Motor neuron (in vitro differentiated cells): ENCODE measurements at regions of chr2 and their contacts with region 1.

Region 1: DNA sequence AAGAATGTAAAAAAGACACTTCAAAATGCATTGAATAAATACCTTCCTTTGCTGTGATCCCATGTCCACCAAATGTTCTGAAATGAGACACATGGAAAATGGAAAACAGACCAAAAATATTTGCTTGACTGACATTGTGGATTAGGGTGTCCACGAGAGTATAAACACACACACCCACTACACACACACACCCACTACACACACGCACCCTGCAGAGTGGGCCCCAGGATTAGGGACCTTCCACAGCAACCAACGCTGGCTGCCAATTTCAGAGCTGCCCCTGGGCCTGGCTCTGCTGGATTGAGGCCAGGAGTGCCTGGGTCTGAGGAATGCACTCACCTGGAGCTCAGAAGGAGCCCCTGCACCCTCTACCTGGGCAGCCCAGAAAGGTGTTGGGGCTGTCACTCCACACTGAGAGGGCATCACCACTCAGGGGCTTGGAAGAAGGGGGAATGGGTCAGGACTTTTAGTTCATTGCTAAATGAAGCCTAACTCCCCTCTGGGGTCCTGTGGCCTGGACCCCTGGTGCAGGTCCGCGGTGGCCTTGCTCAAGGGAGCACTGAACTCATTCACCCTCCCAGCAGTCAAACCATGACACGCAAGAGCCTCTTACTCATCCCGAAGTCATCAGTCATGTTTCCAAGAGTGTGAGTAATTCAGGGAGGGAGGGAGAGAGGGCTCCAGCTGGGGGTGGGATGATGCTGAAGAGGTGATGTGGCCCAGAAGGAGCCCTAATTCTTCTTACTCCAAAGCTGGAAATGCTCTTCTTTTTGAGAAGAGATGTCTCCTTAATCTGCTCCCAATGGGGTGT is 50.2 kb upstream of the PLB1 start:
- ATAC-seq: peak in 7 of 8 experiments; percentile 67 to 95 (median 94)
- H3K4me3 ChIP-seq: no peak overlapping the region
- H3K27ac ChIP-seq: peak overlapping the region in 1 of 2 donors; percentile 78
- H3K4me1 ChIP-seq: peaks cover 0 to 4% of the 10 kb centered on the region in 2 donors

Region 2: DNA sequence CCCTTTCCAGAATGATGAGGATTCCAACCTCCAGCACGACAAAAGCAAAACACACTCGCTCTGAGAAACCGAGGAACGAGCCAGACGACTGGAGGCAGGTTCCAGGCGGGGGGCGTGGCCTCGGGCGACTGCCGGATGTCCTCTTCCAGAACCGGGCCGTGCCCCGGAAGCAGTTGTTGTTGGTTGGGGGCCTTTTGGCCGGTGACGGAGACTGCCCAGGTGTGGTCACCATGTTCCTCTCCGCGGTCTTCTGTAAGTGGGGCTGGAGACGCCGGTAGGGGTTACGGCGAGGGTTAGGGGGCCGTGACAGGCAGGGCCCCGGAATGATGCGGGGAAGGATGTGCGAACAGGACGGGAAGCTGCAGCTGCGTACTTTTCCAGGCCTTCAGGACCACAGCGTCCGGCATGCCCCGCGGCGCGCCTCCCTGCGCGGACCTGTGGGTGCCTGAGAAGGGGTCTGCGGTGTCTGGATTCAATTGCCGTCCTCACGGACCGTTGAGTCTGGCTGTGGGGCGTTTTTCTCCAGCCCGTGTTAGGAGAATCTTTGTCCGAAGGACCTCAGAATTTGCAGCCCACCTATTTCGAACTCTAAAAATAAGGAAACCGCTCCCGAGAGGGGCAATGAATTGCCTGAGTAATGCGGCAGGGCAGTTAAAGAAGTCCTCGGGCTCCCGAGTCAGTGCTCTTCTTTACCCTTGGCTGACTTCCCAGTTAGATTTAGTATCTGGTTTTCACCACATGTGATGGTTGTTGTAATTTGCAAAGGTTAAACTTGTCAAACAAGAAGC is 673.9 kb before region 1 on chr2 and contains the start of gene MRPL33:
- in situ Hi-C with region 1: loop called in 1 of 9 experiments (anchors 25 kb)
- ATAC-seq: peak; percentile 96 to 99 (median 98)
- H3K4me3 ChIP-seq: peak within 1 kb of the TSS; percentile 63 to 87 (median 68)
- H3K27ac ChIP-seq: peak within 1 kb of the TSS; percentile 86 to 97
- H3K4me1 ChIP-seq: peaks cover 13 to 15% of the 10 kb centered on the region in 2 donors
- total RNA-seq, gene MRPL33: 152 to 352 (median 169) TPM

Region 3: GRCh38 chr2:28269019-28269784 is 176.5 kb before region 1 on chr2:
- in situ Hi-C with region 1: no loop called
- ATAC-seq: peak in 5 of 8 experiments; percentile 24 to 96 (median 95)
- H3K4me3 ChIP-seq: no peak overlapping the region
- H3K27ac ChIP-seq: no peak overlapping the region
- H3K4me1 ChIP-seq: no peaks in the 10 kb centered on the region